Head of caudate nucleus (tissue), 42 donors: ENCODE measurements at regions of chr16 and their contacts with region 1.

Region 1: GRCh38 chr16:28846080-28846932 is at the start of gene TUFM:
- DNase-seq: peak; percentile 98 to 100 (median 99)

Region 2: DNA sequence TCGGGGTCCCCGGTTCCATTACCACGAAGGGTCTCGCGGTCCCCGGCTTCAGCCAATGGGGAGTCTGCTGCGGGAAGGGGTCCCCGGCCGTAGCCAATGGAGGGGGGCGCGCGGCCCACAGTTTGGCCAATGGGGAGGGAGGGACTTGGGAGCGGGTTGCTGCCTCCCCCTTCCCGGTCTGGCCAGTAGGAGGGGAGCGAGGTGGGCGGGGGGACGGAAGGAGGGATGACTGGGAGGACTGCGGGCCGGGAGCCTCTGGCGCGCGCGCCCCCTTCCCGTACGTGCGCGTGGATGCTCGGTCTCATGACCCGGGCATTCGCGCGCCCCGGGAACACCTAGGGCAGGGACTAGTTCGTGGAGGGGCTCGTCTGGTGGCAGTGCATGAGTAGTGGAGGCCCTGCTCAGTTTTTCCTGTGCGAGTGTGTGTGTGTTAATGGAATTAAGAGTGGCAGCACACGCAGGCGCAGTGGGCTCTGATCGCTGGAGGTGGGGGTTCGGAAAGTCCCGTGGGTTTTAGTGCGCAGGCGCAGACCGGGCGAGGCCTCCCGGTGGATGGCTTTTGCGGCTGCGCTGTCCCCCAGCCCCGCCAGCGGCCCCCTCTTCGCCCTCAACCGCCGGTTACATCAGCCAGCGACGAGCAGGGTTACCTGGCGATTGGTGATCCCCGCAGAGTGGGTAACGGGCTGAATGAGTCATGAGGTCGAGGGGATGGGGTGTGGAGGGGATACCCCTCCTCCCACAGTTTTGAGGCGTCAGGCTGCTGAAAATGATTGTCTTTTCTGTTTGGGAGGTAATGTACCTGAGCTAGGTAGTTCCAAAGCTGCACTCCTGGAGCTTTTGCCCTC is 22.2 kb before region 1 on chr16:
- intact Hi-C with region 1: loop called (anchors 1 kb)
- DNase-seq: peak; percentile 84 to 99 (median 95)

Region 3: DNA sequence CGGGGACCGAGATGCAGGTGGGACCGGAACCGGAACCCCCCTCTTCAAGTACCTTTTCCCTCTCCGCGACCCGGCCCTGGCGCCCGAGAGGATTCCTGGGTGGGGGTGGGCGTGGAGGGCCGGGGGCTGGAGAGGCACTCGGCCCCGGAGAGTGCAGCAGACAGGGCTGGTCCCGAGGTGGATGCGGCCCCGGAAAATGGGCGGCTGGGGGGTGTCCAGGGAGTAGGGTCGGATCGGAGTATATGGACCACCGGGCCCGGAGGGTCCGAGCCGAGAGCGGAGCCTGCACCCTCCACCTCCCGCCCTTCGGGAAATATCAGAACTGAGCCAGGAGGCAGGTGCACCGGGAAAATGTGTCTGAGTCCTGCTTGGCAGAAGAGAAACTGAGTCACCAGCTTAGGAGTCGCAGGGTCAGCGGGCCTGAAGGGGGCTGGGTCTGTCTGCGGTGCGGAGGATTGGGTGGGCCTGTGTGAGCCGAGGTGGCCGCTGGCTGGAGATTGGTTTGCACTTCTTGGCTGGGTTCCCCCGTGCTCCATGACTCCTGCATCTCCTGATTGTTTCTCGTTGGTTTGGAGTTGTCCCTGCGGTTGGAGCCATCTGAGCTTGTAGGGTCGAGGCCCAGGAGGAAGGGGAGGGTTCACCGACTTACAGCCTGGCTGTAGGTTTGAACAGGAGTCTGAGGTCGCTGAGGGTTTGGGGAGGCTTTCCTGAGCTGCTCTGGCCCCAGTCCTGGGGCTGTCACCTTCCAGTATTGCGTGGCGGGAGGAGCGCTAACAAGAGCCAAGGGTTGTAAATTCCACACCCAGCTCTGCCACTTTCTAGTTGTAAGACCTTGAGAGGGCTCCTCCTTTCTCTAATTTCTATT is 17.9 kb after region 1 on chr16:
- intact Hi-C with region 1: loop called (anchors 1 kb)
- DNase-seq: peak in 7 of 42 donors; percentile 6 to 44 (median 21)

Region 4: DNA sequence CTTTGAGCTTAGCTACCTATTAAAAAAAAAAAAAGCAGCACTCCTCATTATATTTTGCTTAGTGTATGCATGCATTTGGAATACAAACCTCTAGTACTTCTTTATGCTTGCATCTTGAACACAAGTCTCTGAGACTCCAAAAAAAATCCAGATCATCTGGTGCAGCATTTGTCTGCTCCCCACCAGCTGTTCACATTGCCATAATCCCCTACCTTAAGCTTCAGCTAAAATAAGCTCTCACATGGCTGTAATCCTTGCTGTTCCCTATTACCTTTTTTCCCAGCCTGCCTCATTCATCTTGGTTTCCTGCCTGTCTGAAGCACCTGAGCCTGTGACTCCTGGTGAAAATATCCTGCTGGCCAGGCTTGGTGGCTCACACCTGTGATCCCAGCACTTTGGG is 97.0 kb after region 1 on chr16:
- intact Hi-C with region 1: loop called (anchors 10 kb)
- DNase-seq: no peak